ENCODE measurements at regions of chr1 and their contacts with region 1.

Region 1: DNA sequence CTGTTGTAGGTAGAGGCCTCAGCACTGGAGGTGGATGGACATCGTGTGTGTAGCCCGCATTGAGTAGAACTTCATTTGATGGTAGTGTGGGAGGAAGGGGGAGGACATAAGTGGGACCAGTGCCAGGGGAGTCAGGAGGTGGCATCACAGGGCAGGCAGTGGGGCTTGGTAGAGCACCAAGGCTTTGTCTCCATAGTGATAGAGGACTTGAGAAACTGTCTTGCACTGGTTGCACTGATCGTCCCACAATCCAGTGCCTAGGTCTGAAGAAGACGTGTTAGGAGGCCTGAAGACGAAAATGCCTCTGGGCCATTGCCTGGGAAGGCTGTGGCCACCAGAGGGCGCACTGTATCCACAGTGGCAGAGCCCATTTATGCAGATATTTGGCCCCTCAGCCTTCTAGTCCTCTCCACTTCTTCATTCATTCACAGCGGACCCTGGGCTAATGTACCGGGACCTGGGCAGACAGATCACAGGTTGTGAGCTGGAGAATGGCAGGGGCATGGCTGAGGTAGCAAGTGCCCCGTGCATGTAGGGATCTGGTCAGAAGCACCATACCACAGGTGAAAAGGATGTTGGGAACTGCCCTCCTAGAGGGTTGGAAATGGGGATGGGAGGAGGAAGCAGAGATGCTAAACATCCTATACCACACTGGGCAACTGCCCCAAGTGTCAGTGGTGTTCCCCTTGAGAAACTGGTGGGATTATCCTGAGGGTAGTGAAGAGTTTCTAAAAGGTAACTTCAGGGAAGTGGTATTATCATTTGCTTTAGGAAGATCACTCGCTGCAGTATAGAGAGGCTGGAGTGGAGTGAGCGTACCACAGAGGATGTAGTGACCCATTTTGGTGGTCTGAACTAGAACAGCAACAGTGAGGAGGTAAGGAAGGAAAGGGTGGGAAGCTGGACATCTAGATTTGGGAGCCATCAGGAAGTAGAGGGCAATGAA is 95.3 kb downstream of the PIK3R3 start:
- DNase-seq: peak; percentile 90
- H3K4me3 ChIP-seq: no peak overlapping the region
- H3K27ac ChIP-seq: peak overlapping the region; percentile 7
- H3K4me1 ChIP-seq: peaks cover 55% of the 10 kb centered on the region
- CTCF ChIP-seq: peak; percentile 97

Region 2: GRCh38 chr1:46197964-46198811 is 161.0 kb after region 1 on chr1 and contains the start of gene POMGNT1:
- CTCF ChIA-PET with region 1: no interaction called
- POLR2A ChIA-PET with region 1: no interaction called
- intact Hi-C with region 1: loop called (anchors 1 kb)
- DNase-seq: peak; percentile 76
- H3K4me3 ChIP-seq: peak within 1 kb of the TSS; percentile 70
- H3K27ac ChIP-seq: peak within 1 kb of the TSS; percentile 57
- H3K4me1 ChIP-seq: peaks cover 25% of the 10 kb centered on the region
- CTCF ChIP-seq: peak; percentile 69
- total RNA-seq, gene POMGNT1: 26.8 and 37.3 TPM in 2 replicates

Measured in OCI-LY7 (cell line).